RWPE1 (cell line): ENCODE measurements at regions of chr15 and their contacts with region 1.

Region 1: DNA sequence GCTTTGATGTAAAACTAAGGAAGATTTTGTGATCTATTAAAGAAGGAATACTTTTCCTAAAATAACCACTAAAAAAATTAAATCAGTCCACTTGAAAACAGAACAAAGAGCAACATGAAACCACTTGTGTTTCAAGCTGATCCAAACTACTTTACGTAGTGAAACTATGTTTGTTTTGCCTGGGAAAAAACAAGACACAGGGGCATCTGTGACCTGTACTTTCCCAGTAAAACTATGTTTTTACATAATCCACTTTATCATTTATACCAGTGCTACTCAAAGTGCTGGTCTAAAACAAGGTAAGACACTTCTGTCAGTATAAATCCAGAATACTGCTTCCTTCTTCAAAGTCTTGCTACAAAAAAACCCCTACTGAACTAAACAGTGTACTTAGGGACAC is 56.7 kb downstream of the SPG11 start:
- DNase-seq: no peak
- H3K27ac ChIP-seq: no peak overlapping the region
- CTCF ChIP-seq: no peak

Region 2: GRCh38 chr15:44536962-44537734 is 69.6 kb before region 1 on chr15 and contains the start of gene EIF3J:
- CTCF ChIA-PET with region 1: no interaction called
- POLR2A ChIA-PET with region 1: no interaction called
- DNase-seq: peak; percentile 49
- H3K27ac ChIP-seq: peak within 1 kb of the TSS; percentile 100
- CTCF ChIP-seq: no peak

Region 3: DNA sequence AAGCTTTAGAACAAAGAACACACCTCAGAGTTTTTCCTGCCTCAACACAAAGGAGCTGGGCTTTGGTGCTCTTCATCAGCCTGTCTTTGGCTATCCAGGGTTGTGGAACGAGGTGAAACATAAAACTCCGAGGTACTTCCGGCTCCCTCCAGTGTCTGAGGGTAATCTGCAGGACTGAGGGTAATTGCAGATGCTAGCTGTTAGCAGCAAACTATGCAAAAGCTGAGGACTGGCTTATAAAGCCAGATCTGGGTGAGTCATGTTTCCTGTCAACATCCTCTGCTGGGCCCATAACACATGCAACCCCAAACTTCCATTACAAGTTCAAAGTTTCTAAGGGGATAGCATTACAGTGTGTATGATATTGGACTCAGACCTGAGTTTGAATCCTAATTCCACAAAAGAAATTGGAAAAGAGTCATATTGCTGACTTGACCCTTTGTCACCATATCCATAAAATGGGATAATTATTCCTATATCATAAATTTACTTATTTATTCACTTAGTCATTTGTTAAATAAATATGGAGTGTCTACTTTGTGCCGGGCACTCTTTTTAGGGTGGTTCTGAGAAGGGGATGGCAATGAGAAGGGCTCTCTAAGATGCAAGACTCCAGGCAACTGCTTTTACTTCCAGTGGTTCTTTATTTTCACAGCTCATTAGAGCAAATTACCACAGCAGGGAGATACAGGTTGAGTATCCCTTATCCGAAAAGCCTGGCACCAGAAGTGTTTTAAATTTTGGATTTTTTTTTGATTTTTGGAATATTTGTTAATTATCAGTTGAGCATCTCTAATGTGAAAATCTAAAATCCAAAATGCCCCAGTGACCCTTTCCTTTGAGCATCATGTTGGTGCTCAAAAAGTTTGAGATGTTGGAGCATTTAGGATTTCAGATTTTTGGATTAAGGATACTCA is 120.1 kb after region 1 on chr15:
- CTCF ChIA-PET with region 1: no interaction called
- POLR2A ChIA-PET with region 1: interaction called, 18 read pairs
- DNase-seq: peak; percentile 79
- H3K27ac ChIP-seq: peak overlapping the region; percentile 76
- CTCF ChIP-seq: no peak